Right ventricle myocardium inferior (tissue), 1 donor: ENCODE measurements at regions of chr12 and their contacts with region 1.

Region 1: GRCh38 chr12:52561880-52562449 is 9.0 kb upstream of the KRT71 start:
- DNase-seq: no peak
- ATAC-seq: no peak

Region 2: DNA sequence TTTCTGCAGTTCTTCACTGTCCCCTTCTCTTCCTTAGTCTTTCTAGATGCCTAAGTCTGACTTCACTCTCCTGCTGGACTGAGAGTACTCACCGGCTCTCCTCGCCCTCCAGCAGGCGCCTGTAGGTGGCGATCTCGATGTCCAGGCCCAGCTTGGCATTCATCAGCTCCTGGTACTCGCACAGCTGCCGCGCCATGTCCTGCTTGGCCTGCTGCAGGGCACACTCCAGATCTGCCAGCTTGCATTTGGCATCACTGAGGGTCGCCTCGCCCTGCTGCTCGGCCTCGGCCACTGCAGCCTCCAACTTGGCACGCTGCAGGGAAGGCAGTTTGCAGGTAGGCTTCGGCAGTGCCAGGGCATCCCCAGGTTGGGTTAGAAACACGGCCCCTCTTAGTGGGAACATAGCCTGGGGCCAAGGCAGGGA is 181.7 kb before region 1 on chr12:
- intact Hi-C with region 1: loop called (anchors 10 kb)
- DNase-seq: peak; percentile 61
- ATAC-seq: no peak

Region 3: GRCh38 chr12:52522346-52523011 is 39.5 kb before region 1 on chr12:
- intact Hi-C with region 1: no loop called
- DNase-seq: no peak
- ATAC-seq: no peak